WTC11 (cell line): ENCODE measurements at regions of chr6 and their contacts with region 1.

Region 1: GRCh38 chr6:131519670-131520436 is 53.2 kb upstream of the ARG1 start:
- DNase-seq: peak; percentile 59
- ATAC-seq: peak; percentile 98
- H3K4me3 Mint-ChIP-seq: no peak overlapping the region
- H3K27ac Mint-ChIP-seq: no peak overlapping the region
- H3K4me1 Mint-ChIP-seq: peaks cover 3% of the 10 kb centered on the region
- H3K27me3 Mint-ChIP-seq: no peaks in the 10 kb centered on the region; the same call in none of the 2 replicates
- CTCF ChIP-seq: peak; percentile 26

Region 2: GRCh38 chr6:131390322-131390721 is 129.5 kb before region 1 on chr6:
- CTCF ChIA-PET with region 1: no interaction called
- POLR2A ChIA-PET with region 1: no interaction called
- DNase-seq: no peak
- ATAC-seq: no peak
- H3K4me3 Mint-ChIP-seq: no peak overlapping the region
- H3K27ac Mint-ChIP-seq: no peak overlapping the region
- H3K4me1 Mint-ChIP-seq: peaks cover 25% of the 10 kb centered on the region
- H3K27me3 Mint-ChIP-seq: peaks cover 17% of the 10 kb centered on the region
- CTCF ChIP-seq: no peak

Region 3: GRCh38 chr6:131532580-131533039 is 12.8 kb after region 1 on chr6:
- CTCF ChIA-PET with region 1: interaction called, 25 read pairs
- POLR2A ChIA-PET with region 1: no interaction called
- DNase-seq: no peak
- ATAC-seq: no peak
- H3K4me3 Mint-ChIP-seq: no peak overlapping the region
- H3K27ac Mint-ChIP-seq: no peak overlapping the region
- H3K4me1 Mint-ChIP-seq: peaks cover 20% of the 10 kb centered on the region
- H3K27me3 Mint-ChIP-seq: peaks cover 15% of the 10 kb centered on the region
- CTCF ChIP-seq: no peak

Region 4: GRCh38 chr6:131597446-131597845 is 77.6 kb after region 1 on chr6:
- CTCF ChIA-PET with region 1: no interaction called
- POLR2A ChIA-PET with region 1: no interaction called
- DNase-seq: no peak
- ATAC-seq: no peak
- H3K4me3 Mint-ChIP-seq: no peak overlapping the region
- H3K27ac Mint-ChIP-seq: no peak overlapping the region
- H3K4me1 Mint-ChIP-seq: no peaks in the 10 kb centered on the region
- H3K27me3 Mint-ChIP-seq: no peaks in the 10 kb centered on the region
- CTCF ChIP-seq: 0 out of 2 replicates have a peak, but pooled peaks have one; percentile 11

Region 5: DNA sequence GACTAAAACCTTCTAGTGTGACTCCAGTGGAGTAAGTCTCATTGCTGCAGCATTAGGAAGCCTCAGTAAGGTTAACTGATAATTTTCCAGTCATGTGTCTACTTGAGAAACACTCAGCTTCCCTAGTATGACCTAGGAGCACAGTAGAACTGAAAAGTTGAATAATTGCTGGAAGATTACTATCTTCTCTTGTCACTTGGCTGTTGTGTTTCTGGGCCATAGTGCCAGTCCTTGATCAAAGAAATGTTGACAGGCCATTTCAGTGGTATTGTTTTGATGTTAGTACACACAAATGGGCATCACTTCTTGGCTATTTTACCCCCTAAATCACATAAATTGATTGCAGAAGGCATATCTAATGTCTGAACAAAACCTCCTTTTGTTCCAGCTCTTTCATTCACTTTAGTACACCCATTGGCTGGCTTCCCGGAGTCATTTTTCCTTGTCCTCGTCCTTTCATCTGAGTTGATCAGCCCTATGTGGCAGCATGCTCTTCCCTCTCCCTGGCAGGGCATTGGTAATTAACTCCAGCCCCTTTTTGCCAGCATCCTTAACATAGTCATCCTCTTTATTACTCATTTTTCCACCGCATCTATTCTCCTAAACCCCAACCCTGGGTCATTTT is 123.2 kb after region 1 on chr6:
- CTCF ChIA-PET with region 1: no interaction called
- POLR2A ChIA-PET with region 1: no interaction called
- DNase-seq: no peak
- ATAC-seq: no peak
- H3K4me3 Mint-ChIP-seq: no peak overlapping the region
- H3K27ac Mint-ChIP-seq: no peak overlapping the region
- H3K4me1 Mint-ChIP-seq: no peaks in the 10 kb centered on the region
- H3K27me3 Mint-ChIP-seq: peaks cover 11% of the 10 kb centered on the region
- CTCF ChIP-seq: no peak